ENCODE measurements at regions of chr4 and their contacts with region 1.

Region 1: DNA sequence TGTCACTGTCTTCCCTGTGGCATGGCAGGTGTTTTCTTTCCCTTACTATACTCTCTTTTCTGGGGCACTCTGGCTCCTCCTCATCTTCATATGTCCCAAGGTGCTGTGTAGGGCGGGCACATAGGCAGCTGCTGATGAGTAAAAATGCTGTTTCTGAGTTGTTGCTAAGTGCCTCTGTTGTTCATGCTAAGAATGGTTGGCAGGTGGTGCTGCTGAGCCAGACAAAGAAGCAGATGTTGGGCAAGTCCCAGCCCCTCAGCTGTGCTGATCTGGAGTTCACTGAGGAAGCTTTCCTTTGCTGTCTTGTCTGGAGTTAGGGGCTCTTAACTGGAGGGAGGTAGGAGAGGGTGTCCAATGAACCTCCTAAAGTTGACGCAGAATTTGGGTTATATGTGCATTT is 40.6 kb downstream of the HADH start:
- DNase-seq: peak; percentile 49
- H3K4me3 ChIP-seq: no peak overlapping the region
- H3K27ac ChIP-seq: no peak overlapping the region
- H3K4me1 ChIP-seq: no peaks in the 10 kb centered on the region
- H3K27me3 ChIP-seq: no peaks in the 10 kb centered on the region
- CTCF ChIP-seq: peak; percentile 17 to 55
- POLR2A ChIP-seq: no peak

Region 2: DNA sequence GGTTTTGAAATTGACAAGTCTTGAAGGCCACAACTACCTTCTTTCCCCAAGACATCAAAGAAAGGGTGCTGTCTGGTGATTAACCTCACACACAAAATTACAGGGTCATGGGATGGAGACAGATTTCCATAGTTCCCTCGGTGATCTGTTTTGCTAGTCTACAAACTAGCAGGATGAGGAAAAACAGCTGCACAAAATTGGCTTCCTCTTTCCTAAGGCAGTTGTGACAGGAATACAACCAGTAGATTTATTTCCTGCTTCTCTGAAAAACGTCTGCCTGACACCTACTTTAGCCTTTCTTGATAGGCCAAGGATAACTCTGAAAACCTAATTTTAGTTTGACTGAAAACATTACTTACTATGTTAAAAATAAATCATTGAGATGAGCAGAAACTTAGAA is 1033.8 kb before region 1 on chr4:
- CTCF ChIA-PET with region 1: no interaction called
- POLR2A ChIA-PET with region 1: no interaction called
- dilution Hi-C with region 1: no loop called
- intact Hi-C with region 1: no loop called
- DNase-seq: no peak
- H3K4me3 ChIP-seq: no peak overlapping the region
- H3K27ac ChIP-seq: no peak overlapping the region
- H3K4me1 ChIP-seq: no peaks in the 10 kb centered on the region
- H3K27me3 ChIP-seq: peaks cover 1 to 4% of the 10 kb centered on the region in 2 experiments
- CTCF ChIP-seq: no peak
- POLR2A ChIP-seq: no peak

Region 3: DNA sequence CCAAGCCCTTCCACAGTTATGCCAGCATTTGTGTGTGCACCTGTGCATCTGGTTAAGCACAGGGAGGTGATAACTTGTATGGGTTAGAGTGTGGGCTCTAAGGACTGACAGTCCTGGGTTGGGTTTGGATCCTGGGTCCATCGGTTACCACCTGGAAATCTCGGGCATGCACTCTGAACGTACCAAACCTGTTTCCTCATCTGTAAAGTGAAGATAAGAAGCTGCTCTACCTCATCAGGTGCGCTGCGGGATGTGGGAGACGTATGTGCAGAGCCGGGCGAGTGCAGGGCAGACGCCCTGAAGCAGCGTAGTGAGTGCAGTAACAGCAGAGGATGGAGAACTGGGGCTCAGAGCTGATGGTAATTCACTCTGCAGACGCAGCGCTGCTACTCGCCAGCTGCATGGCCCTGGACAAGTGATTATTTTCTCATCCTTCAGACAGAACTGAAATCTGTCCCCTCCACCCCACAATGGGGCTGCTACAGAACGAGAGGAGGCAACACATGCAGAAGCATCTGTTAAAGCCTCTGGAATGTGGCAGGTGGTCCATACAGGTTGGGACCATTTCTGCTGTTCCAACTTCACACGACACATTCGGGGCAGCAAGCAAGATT is 23.8 kb after region 1 on chr4:
- CTCF ChIA-PET with region 1: no interaction called
- POLR2A ChIA-PET with region 1: no interaction called
- dilution Hi-C with region 1: no loop called
- intact Hi-C with region 1: no loop called
- DNase-seq: no peak
- H3K4me3 ChIP-seq: no peak overlapping the region
- H3K27ac ChIP-seq: no peak overlapping the region
- H3K4me1 ChIP-seq: no peaks in the 10 kb centered on the region
- H3K27me3 ChIP-seq: peaks cover 3 to 4% of the 10 kb centered on the region in 2 experiments
- CTCF ChIP-seq: no peak
- POLR2A ChIP-seq: no peak

Region 4: DNA sequence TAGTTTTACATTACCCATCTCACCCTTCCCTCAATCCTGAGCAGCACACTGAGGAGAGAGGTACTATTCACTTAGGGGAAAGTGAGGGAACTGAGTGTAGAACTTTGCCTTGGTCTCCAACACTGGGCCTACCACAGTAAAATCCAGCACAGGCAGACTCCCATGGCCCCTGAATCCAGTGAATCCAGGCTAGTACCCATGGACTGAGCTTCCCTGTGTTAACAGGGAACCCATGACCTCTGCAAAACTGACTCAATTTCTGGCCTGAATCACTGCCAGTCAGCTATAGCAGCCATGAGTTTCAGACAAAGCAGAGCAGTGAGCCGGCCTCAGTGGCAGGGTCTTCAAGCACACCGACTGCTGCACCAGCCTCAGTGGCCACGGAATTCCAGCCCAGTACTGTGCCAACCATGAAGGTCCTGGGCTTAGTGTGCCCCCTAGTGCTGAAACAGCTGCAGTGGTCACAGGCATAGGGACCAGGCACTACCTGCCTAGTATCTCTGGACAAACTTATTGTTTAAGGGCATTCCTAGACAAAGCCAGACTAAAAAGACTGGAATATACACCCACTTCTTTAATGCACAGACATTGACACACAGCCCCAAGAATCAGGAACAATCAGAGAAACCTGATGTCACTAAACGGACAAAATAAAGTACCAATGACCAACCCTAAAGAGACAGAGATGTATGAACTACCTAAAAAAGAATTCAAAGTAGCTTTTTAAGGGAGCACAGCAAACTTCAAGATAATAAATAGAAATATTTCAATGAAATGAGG is 462.7 kb after region 1 on chr4:
- CTCF ChIA-PET with region 1: interaction called, 15 read pairs
- POLR2A ChIA-PET with region 1: no interaction called
- dilution Hi-C with region 1: no loop called
- intact Hi-C with region 1: loop called (anchors 1 kb)
- DNase-seq: no peak
- H3K4me3 ChIP-seq: no peak overlapping the region
- H3K27ac ChIP-seq: no peak overlapping the region
- H3K4me1 ChIP-seq: no peaks in the 10 kb centered on the region
- H3K27me3 ChIP-seq: no peaks in the 10 kb centered on the region
- CTCF ChIP-seq: peak; percentile 50 to 58
- POLR2A ChIP-seq: no peak

Region 5: DNA sequence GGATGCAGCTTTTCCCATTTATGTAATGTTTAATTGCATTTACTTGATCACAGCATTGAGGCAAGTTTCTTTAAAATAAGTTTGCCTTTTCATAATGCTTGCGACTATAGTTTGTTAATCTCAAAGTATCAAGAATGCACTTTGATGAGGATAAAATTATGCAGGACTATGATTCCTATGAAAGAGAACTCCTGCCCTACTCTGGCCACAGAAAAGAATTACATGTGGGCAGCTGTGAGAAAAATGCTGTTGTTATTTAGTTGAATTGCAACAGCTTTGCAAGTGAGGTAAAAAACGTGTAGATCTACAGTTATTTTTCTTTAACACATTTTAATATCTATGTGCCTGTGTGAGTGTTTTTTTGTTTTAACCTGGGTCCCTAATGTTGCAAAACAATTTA is 607.5 kb after region 1 on chr4:
- CTCF ChIA-PET with region 1: interaction called, 12 read pairs
- POLR2A ChIA-PET with region 1: no interaction called
- dilution Hi-C with region 1: no loop called
- intact Hi-C with region 1: no loop called
- DNase-seq: no peak
- H3K4me3 ChIP-seq: no peak overlapping the region
- H3K27ac ChIP-seq: no peak overlapping the region
- H3K4me1 ChIP-seq: no peaks in the 10 kb centered on the region
- H3K27me3 ChIP-seq: no peaks in the 10 kb centered on the region
- CTCF ChIP-seq: no peak
- POLR2A ChIP-seq: no peak

Measured in endothelial cell of umbilical vein (primary cell).